Naive thymus-derived CD4-positive, alpha-beta T cell (primary cell): ENCODE measurements at regions of chr5 and their contacts with region 1.

Region 1: GRCh38 chr5:77030097-77031071 is at the start of gene AGGF1:
- DNase-seq: peak; percentile 69 to 93 (median 90)
- ATAC-seq: peak; percentile 99
- H3K4me3 ChIP-seq: peak within 1 kb of the TSS; percentile 94
- H3K4me3 Mint-ChIP-seq: peak within 1 kb of the TSS; percentile 77 to 97 (median 94)
- H3K27ac ChIP-seq: peak within 1 kb of the TSS; percentile 86
- H3K27ac Mint-ChIP-seq: peak within 1 kb of the TSS; percentile 88 to 97 (median 92)
- H3K4me1 ChIP-seq: peaks cover 11 to 24% of the 10 kb centered on the region in 2 donors
- H3K4me1 Mint-ChIP-seq: peaks cover 19 to 58% (median 40%) of the 10 kb centered on the region in 7 donors
- H3K27me3 ChIP-seq: no peaks in the 10 kb centered on the region
- H3K27me3 Mint-ChIP-seq: peaks cover 0 to 9% (median 0%) of the 10 kb centered on the region in 5 donors
- total RNA-seq, gene AGGF1: 17.2 to 32.4 (median 29.2) TPM

Region 2: DNA sequence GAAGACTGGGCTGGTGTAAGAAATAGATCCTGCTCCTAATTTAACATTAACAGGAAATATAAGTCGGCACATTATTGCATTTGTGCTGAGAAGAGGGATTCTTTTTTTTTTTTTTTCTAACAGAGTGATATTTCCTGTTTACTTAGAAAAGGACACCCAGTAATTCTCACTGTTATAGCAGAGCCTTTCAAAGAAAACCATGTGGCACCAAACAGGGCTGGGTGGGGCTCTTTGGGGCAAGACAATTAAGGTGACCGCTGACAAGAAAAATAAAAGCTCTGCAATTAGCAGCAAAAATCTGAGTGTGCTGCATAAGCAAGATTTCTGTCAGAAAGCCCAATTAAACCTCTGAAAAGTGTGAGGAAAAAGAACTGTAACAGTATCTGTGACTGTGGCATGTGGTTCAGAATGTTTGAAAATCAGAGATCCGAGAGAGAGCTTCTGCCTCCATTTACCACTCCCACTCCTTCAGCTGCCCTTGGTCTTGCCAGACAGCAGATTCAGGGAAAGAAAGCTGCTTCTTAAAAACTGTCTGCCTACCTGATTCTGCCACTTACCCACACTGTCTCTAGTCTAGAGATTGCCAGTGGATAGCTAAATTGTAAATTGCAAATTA is 704.4 kb before region 1 on chr5:
- CTCF ChIA-PET with region 1: no interaction called
- POLR2A ChIA-PET with region 1: no interaction called
- intact Hi-C with region 1: loop called in 1 of 2 experiments (anchors 1 kb)
- DNase-seq: peak in 6 of 9 donors; percentile 30 to 63 (median 48)
- ATAC-seq: peak; percentile 90
- H3K4me3 ChIP-seq: peak overlapping the region; percentile 22
- H3K4me3 Mint-ChIP-seq: peak overlapping the region; percentile 71 to 84 (median 76)
- H3K27ac ChIP-seq: peak overlapping the region; percentile 59
- H3K27ac Mint-ChIP-seq: peak overlapping the region; percentile 88 to 98 (median 93)
- H3K4me1 ChIP-seq: peaks cover 31 to 57% of the 10 kb centered on the region in 2 donors
- H3K4me1 Mint-ChIP-seq: peaks cover 46 to 75% (median 58%) of the 10 kb centered on the region in 7 donors
- H3K27me3 ChIP-seq: no peaks in the 10 kb centered on the region
- H3K27me3 Mint-ChIP-seq: no peaks in the 10 kb centered on the region

Region 3: GRCh38 chr5:76855961-76856360 is 174.4 kb before region 1 on chr5:
- CTCF ChIA-PET with region 1: no interaction called
- POLR2A ChIA-PET with region 1: no interaction called
- intact Hi-C with region 1: loop called in 1 of 2 experiments (anchors 5 kb)
- DNase-seq: peak in 7 of 9 donors; percentile 23 to 60 (median 43)
- ATAC-seq: peak; percentile 88
- H3K4me3 ChIP-seq: no peak overlapping the region
- H3K4me3 Mint-ChIP-seq: peak overlapping the region; percentile 35 to 77 (median 70)
- H3K27ac ChIP-seq: peak overlapping the region; percentile 27
- H3K27ac Mint-ChIP-seq: peak overlapping the region; percentile 49 to 95 (median 84)
- H3K4me1 ChIP-seq: peaks cover 21 to 27% of the 10 kb centered on the region in 2 donors
- H3K4me1 Mint-ChIP-seq: peaks cover 27 to 49% (median 45%) of the 10 kb centered on the region in 7 donors
- H3K27me3 ChIP-seq: no peaks in the 10 kb centered on the region
- H3K27me3 Mint-ChIP-seq: no peaks in the 10 kb centered on the region

Region 4: DNA sequence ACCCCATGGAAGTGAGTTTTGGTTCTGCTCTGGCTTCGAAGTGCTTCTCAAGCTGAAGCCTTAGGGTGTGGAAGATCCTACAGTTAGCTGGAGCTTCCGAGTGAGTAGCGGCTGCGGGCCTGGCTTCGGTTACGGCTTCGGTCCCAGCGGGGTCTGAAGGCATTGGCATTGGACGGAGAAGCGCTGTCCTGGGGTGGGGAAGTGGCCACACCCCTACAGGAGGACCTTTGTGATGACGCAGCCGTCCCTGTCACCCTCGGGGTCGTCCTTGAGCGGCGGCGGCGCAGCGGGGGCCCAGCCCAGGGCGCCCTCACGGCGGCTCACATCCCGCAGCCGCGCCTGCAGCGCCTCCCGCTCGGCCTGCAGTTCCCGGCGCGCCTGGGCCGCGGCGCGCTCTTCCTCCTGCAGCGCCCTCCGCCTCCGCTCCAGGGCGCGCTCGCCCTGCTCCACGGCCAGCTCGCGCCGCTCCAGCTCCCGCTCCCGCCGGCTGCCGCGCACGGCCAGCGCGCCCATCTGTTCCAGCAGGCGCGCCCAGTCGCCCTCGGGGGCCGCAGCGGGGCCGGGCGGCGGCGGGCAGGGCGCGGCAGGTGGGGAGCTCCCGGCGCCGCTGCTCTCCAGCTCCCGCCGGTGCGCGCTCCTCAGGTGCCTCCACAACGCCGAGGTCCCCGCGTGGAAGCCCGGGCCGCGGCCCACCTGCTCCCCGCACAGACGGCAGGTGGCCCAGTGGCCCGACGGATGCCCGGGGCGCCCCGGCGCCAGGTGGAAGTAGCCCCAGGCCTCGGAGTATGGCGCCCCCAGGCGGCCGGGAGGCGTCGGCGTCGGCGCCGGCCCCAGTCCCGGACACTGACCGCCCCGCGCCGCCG is 46.8 kb after region 1 on chr5:
- CTCF ChIA-PET with region 1: interaction called, 3 read pairs
- POLR2A ChIA-PET with region 1: no interaction called
- intact Hi-C with region 1: loop called in 1 of 2 experiments (anchors 2 kb)
- DNase-seq: peak; percentile 12 to 78 (median 39)
- ATAC-seq: peak; percentile 88
- H3K4me3 ChIP-seq: peak overlapping the region; percentile 20
- H3K4me3 Mint-ChIP-seq: peak overlapping the region; percentile 46 to 80 (median 62)
- H3K27ac ChIP-seq: no peak overlapping the region
- H3K27ac Mint-ChIP-seq: no peak overlapping the region
- H3K4me1 ChIP-seq: peaks cover 3 to 4% of the 10 kb centered on the region in 2 donors
- H3K4me1 Mint-ChIP-seq: peaks cover 8 to 16% (median 11%) of the 10 kb centered on the region in 7 donors
- H3K27me3 ChIP-seq: no peaks in the 10 kb centered on the region
- H3K27me3 Mint-ChIP-seq: no peaks in the 10 kb centered on the region

Region 5: GRCh38 chr5:77155179-77155785 is 124.9 kb after region 1 on chr5:
- CTCF ChIA-PET with region 1: no interaction called
- POLR2A ChIA-PET with region 1: no interaction called
- intact Hi-C with region 1: loop called in 1 of 2 experiments (anchors 2 kb)
- DNase-seq: peak in 7 of 9 donors; percentile 81 to 94 (median 91)
- ATAC-seq: peak; percentile 96
- H3K4me3 ChIP-seq: no peak overlapping the region
- H3K4me3 Mint-ChIP-seq: peak overlapping the region in 9 of 10 donors; percentile 22 to 83 (median 60)
- H3K27ac ChIP-seq: peak overlapping the region; percentile 67
- H3K27ac Mint-ChIP-seq: peak overlapping the region in 8 of 9 donors; percentile 74 to 99 (median 96)
- H3K4me1 ChIP-seq: peaks cover 0 to 27% of the 10 kb centered on the region in 2 donors
- H3K4me1 Mint-ChIP-seq: peaks cover 17 to 40% (median 33%) of the 10 kb centered on the region in 7 donors
- H3K27me3 ChIP-seq: no peaks in the 10 kb centered on the region
- H3K27me3 Mint-ChIP-seq: peaks cover 0 to 12% (median 3%) of the 10 kb centered on the region in 5 donors

Region 6: GRCh38 chr5:77775790-77776553 is 745.6 kb after region 1 on chr5 and contains the start of gene TBCA:
- CTCF ChIA-PET with region 1: no interaction called
- POLR2A ChIA-PET with region 1: no interaction called
- intact Hi-C with region 1: loop called (anchors 1 to 5 kb)
- DNase-seq: peak; percentile 87 to 94 (median 93)
- ATAC-seq: peak; percentile 92
- H3K4me3 ChIP-seq: peak within 1 kb of the TSS; percentile 72
- H3K4me3 Mint-ChIP-seq: peak within 1 kb of the TSS; percentile 90 to 99 (median 94)
- H3K27ac ChIP-seq: peak within 1 kb of the TSS; percentile 97
- H3K27ac Mint-ChIP-seq: peak within 1 kb of the TSS; percentile 96 to 98 (median 97)
- H3K4me1 ChIP-seq: peaks cover 13 to 26% of the 10 kb centered on the region in 2 donors
- H3K4me1 Mint-ChIP-seq: peaks cover 32 to 60% (median 49%) of the 10 kb centered on the region in 7 donors
- H3K27me3 ChIP-seq: no peaks in the 10 kb centered on the region
- H3K27me3 Mint-ChIP-seq: no peaks in the 10 kb centered on the region
- total RNA-seq, gene TBCA: 71.3 to 137 (median 89.3) TPM

Region 7: GRCh38 chr5:78359831-78360673 is 1329.7 kb after region 1 on chr5 and contains the start of gene SCAMP1:
- CTCF ChIA-PET with region 1: no interaction called
- POLR2A ChIA-PET with region 1: interaction called, 4 read pairs
- intact Hi-C with region 1: loop called in 1 of 2 experiments (anchors 10 kb)
- DNase-seq: peak; percentile 84 to 96 (median 93)
- ATAC-seq: peak; percentile 92
- H3K4me3 ChIP-seq: peak within 1 kb of the TSS; percentile 99
- H3K4me3 Mint-ChIP-seq: peak within 1 kb of the TSS; percentile 89 to 97 (median 94)
- H3K27ac ChIP-seq: peak within 1 kb of the TSS; percentile 85
- H3K27ac Mint-ChIP-seq: peak within 1 kb of the TSS; percentile 71 to 97 (median 96)
- H3K4me1 ChIP-seq: peaks cover 11 to 16% of the 10 kb centered on the region in 2 donors
- H3K4me1 Mint-ChIP-seq: peaks cover 27 to 64% (median 55%) of the 10 kb centered on the region in 7 donors
- H3K27me3 ChIP-seq: no peaks in the 10 kb centered on the region
- H3K27me3 Mint-ChIP-seq: no peaks in the 10 kb centered on the region
- total RNA-seq, gene SCAMP1: 16.9 to 27.6 (median 23.0) TPM